ENCODE measurements at regions of chr6 and their contacts with region 1.

Region 1: GRCh38 chr6:76381612-76382011 is 309.1 kb upstream of the IMPG1 start:
- DNase-seq: no peak
- ATAC-seq: no peak
- H3K4me3 ChIP-seq: no peak overlapping the region
- H3K27ac ChIP-seq: no peak overlapping the region
- H3K4me1 ChIP-seq: no peaks in the 10 kb centered on the region
- H3K27me3 ChIP-seq: no peaks in the 10 kb centered on the region
- CTCF ChIP-seq: no peak
- EP300 ChIP-seq: no peak
- POLR2A ChIP-seq: no peak
- RAD21 ChIP-seq: no peak

Region 2: GRCh38 chr6:76397966-76398365 is 16.4 kb after region 1 on chr6:
- CTCF ChIA-PET with region 1: no interaction called
- POLR2A ChIA-PET with region 1: no interaction called
- RAD21 ChIA-PET with region 1: no interaction called
- SMC1A ChIA-PET with region 1: no interaction called
- in situ Hi-C with region 1: no loop called
- intact Hi-C with region 1: loop called (anchors 1 kb)
- DNase-seq: no peak
- ATAC-seq: no peak
- H3K4me3 ChIP-seq: no peak overlapping the region
- H3K27ac ChIP-seq: no peak overlapping the region
- H3K4me1 ChIP-seq: no peaks in the 10 kb centered on the region
- H3K27me3 ChIP-seq: no peaks in the 10 kb centered on the region
- CTCF ChIP-seq: no peak
- EP300 ChIP-seq: no peak
- POLR2A ChIP-seq: no peak
- RAD21 ChIP-seq: no peak